OCI-LY7 (cell line): ENCODE measurements at regions of chr4 and their contacts with region 1.

Region 1: DNA sequence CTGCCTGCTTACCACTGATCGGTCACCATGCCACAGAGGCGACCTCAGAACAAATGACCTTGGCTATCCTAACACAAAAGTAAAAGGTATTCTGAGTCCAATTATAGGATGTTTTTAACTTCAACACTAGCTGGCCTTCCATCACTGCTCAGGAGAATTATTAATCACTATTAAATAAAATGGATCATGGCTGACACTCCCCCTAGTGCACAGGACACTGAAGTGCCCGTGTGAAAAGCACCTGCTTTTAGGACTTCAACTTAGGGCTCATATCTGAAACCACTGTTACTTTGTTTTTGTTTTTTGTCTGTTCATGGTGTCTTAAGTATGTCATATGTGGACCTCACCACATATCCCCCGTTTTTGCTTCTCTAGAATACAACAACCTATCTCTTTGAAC is 33.9 kb downstream of the STX18 start:
- DNase-seq: peak; percentile 40
- H3K4me3 ChIP-seq: no peak overlapping the region
- H3K27ac ChIP-seq: no peak overlapping the region
- H3K4me1 ChIP-seq: peaks cover 3% of the 10 kb centered on the region
- CTCF ChIP-seq: peak; percentile 83

Region 2: GRCh38 chr4:6049985-6050384 is 1542.1 kb after region 1 on chr4:
- CTCF ChIA-PET with region 1: no interaction called
- POLR2A ChIA-PET with region 1: no interaction called
- intact Hi-C with region 1: loop called (anchors 10 kb)
- DNase-seq: no peak
- H3K4me3 ChIP-seq: no peak overlapping the region
- H3K27ac ChIP-seq: no peak overlapping the region
- H3K4me1 ChIP-seq: no peaks in the 10 kb centered on the region
- CTCF ChIP-seq: no peak